Sciatic nerve (tissue), 2 donors: ENCODE measurements at regions of chr1 and their contacts with region 1.

Region 1: DNA sequence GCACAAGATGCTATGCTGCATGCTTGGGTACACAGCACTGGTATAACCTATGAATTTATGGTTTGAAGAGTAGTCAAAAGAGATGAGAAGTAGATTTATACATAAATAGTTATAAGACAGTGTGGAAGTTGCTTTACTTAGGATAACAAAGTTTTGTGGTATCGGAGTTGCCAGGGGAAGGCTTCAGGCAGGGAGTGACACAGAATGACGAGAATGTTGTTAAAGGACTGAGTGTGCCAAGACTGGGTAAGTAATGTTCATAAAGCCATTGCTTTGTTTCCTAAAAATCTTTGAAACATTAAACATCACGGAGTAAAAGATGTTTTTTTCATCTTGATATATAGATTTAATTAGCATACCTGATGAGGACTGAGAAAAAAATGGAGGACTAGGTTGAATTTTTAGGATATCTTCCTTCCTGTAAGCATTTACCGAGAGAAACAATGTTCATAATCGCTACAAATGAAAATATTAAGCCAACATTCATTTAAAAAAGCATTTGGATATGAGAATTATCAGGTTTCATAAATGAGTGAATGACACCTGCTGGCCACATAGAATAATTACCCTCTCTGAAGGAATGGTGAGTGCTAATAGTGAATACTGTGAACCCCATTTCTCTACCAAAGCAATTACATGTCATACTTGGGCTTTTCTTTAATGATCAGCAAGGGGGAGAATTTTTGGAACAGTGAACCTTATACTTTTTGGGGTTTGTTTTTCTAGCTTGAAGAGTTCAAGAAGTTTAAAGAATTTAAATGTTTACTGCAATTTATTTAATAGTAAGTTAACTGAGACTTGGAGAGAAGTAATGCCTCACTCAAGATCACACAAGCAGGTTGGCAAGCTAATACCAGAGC is 28.4 kb downstream of the EXTL2 start:
- DNase-seq: no peak
- ATAC-seq: peak; percentile 75

Region 2: DNA sequence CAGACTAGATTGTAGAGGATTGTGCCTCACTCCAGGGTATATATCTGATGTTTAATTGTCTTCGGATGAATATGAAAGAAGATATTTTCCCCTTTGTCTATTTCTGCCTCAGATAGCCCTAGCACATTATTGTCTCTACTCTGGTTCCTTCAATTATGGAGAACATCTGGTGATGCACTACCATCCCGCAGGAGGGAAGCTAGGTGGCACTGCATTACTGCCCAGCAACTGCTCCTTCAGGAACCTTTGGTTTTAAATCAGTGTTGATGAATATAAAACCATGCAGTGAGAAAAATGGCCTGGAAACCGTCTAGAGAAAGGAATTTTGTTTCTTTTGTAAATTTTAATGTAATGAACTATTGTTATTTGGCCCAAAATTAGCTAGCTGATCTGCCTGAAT is 259.8 kb before region 1 on chr1:
- intact Hi-C with region 1: loop called (anchors 10 kb)
- DNase-seq: no peak
- ATAC-seq: peak; percentile 91